CD4-positive, alpha-beta memory T cell (primary cell): ENCODE measurements at regions of chr16 and their contacts with region 1.

Region 1: GRCh38 chr16:84511180-84511824 is 6.8 kb upstream of the MEAK7 start:
- DNase-seq: peak; percentile 56 to 84 (median 82)
- H3K4me3 ChIP-seq: no peak overlapping the region
- H3K4me3 Mint-ChIP-seq: peak overlapping the region in 7 of 8 donors; percentile 2 to 73 (median 43)
- H3K27ac ChIP-seq: no peak overlapping the region
- H3K27ac Mint-ChIP-seq: peak overlapping the region; percentile 82 to 96 (median 91)
- H3K4me1 ChIP-seq: peaks cover 84% of the 10 kb centered on the region
- H3K4me1 Mint-ChIP-seq: peaks cover 51 to 78% (median 67%) of the 10 kb centered on the region in 4 donors
- H3K27me3 ChIP-seq: no peaks in the 10 kb centered on the region
- H3K27me3 Mint-ChIP-seq: no peaks in the 10 kb centered on the region

Region 2: DNA sequence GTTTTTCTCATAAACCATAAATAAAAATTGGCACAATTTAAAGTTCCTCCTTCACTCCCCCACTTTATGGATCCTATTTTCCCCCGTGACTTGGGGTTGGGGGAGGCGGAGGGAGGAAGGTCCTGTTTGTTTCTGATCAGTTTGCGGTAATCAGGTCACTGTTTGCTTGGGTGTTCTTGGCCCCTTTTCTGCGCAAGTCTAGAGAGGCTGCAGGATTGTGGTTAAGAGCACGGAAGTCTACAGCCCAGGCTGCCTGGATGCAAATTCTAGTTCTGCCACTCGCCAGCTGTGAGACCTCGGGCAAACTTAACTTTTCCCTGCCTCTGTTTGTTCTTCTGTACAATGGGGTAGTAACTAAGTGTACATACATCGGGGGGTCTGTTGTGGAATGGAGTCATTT is 130.9 kb before region 1 on chr16:
- CTCF ChIA-PET with region 1: no interaction called
- POLR2A ChIA-PET with region 1: no interaction called
- intact Hi-C with region 1: no loop called
- DNase-seq: peak in 1 of 5 donors; percentile 17
- H3K4me3 ChIP-seq: no peak overlapping the region
- H3K4me3 Mint-ChIP-seq: peak overlapping the region in 1 of 8 donors; percentile 24
- H3K27ac ChIP-seq: no peak overlapping the region
- H3K27ac Mint-ChIP-seq: peak overlapping the region in 2 of 7 donors; percentile 15 to 39
- H3K4me1 ChIP-seq: no peaks in the 10 kb centered on the region
- H3K4me1 Mint-ChIP-seq: peaks cover 0 to 2% (median 0%) of the 10 kb centered on the region in 4 donors
- H3K27me3 ChIP-seq: no peaks in the 10 kb centered on the region
- H3K27me3 Mint-ChIP-seq: peaks cover 6 to 17% of the 10 kb centered on the region in 2 donors

Region 3: DNA sequence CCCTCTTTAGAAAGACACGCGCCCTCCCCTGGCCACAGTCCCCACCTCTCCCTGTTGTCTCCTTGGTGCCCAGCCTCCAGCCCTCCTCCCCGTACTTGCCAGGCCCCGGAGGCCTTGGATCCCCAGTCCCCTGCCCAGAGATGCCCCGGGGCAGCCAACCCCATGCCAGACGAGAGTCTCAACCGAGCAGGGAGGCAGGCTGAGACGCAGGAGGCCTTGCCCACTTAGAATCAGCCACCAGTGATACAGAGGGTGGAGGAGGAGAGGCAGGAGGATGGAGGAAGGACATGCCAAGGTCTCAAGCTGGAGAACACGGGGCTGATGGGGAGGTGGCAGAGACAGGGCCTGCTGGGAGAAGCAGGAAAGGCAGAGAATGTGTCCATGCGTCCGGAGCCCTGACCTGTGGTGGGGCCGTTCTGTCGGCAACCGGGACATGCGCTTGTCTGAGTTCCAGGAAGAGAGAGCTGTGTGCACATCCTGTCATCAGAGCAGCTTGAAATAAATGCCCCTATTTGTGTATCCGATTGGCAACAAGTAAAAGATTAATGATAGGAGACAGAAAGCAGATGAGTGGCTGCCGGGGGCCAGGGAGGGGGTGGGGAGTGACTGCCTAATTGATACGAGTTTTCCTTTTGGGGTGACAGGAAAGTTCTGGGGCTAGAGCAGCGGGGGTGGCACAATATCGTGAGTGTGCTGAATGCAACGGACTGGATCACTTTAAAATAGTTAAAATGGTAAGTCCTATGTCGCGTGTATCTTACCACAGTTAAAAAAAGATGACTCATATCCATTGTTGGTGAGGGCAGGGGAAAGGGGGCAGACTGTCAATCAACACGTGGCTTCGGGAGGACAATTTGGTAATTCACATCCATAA is 37.9 kb after region 1 on chr16:
- CTCF ChIA-PET with region 1: interaction called, 23 read pairs
- POLR2A ChIA-PET with region 1: interaction called, 56 read pairs
- intact Hi-C with region 1: loop called (anchors 1 kb)
- DNase-seq: peak; percentile 63 to 74 (median 70)
- H3K4me3 ChIP-seq: peak overlapping the region; percentile 49 to 60
- H3K4me3 Mint-ChIP-seq: peak overlapping the region; percentile 84 to 96 (median 91)
- H3K27ac ChIP-seq: peak overlapping the region; percentile 81
- H3K27ac Mint-ChIP-seq: peak overlapping the region; percentile 91 to 99 (median 97)
- H3K4me1 ChIP-seq: peaks cover 78% of the 10 kb centered on the region
- H3K4me1 Mint-ChIP-seq: peaks cover 51 to 77% (median 63%) of the 10 kb centered on the region in 4 donors
- H3K27me3 ChIP-seq: no peaks in the 10 kb centered on the region
- H3K27me3 Mint-ChIP-seq: no peaks in the 10 kb centered on the region

Region 4: GRCh38 chr16:84593825-84594724 is 82.8 kb after region 1 on chr16:
- CTCF ChIA-PET with region 1: interaction called, 37 read pairs
- POLR2A ChIA-PET with region 1: interaction called, 104 read pairs
- intact Hi-C with region 1: no loop called
- DNase-seq: peak; percentile 83 to 95 (median 85)
- H3K4me3 ChIP-seq: peak overlapping the region; percentile 62 to 64
- H3K4me3 Mint-ChIP-seq: peak overlapping the region; percentile 88 to 93 (median 90)
- H3K27ac ChIP-seq: peak overlapping the region; percentile 81
- H3K27ac Mint-ChIP-seq: peak overlapping the region; percentile 95 to 99 (median 98)
- H3K4me1 ChIP-seq: peaks cover 70% of the 10 kb centered on the region
- H3K4me1 Mint-ChIP-seq: peaks cover 47 to 73% (median 65%) of the 10 kb centered on the region in 4 donors
- H3K27me3 ChIP-seq: no peaks in the 10 kb centered on the region
- H3K27me3 Mint-ChIP-seq: no peaks in the 10 kb centered on the region

Region 5: DNA sequence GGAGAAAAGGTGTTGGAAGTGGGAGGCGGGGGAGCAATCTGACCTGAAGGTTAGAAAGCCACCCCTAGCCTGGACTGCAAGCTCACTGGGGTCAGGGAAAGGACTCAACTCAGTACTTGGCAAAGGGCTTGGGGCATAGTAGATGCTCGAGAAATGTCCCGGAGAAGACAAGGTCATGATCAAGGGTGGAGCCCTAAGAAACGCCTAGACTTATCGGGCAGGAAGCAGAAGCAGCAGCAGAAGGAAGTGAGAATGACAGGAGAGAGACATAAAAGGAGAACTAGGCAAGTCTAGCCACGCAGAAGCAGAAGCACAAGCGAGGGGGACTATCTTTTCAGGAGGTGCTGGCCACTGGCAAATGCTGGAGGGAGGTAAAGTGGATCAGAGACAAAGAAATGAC is 96.4 kb after region 1 on chr16:
- CTCF ChIA-PET with region 1: interaction called, 358 read pairs
- POLR2A ChIA-PET with region 1: interaction called, 113 read pairs
- intact Hi-C with region 1: no loop called
- DNase-seq: peak in 4 of 5 donors; percentile 49 to 63 (median 52)
- H3K4me3 ChIP-seq: peak overlapping the region; percentile 18 to 31
- H3K4me3 Mint-ChIP-seq: peak overlapping the region; percentile 64 to 86 (median 76)
- H3K27ac ChIP-seq: peak overlapping the region; percentile 62
- H3K27ac Mint-ChIP-seq: peak overlapping the region; percentile 84 to 99 (median 92)
- H3K4me1 ChIP-seq: peaks cover 98% of the 10 kb centered on the region
- H3K4me1 Mint-ChIP-seq: peaks cover 78 to 97% (median 91%) of the 10 kb centered on the region in 4 donors
- H3K27me3 ChIP-seq: no peaks in the 10 kb centered on the region
- H3K27me3 Mint-ChIP-seq: no peaks in the 10 kb centered on the region

Region 6: GRCh38 chr16:84726079-84726668 is 214.9 kb after region 1 on chr16:
- CTCF ChIA-PET with region 1: interaction called, 78 read pairs
- POLR2A ChIA-PET with region 1: interaction called, 7 read pairs
- intact Hi-C with region 1: loop called (anchors 1 kb)
- DNase-seq: peak; percentile 70 to 80 (median 76)
- H3K4me3 ChIP-seq: no peak overlapping the region
- H3K4me3 Mint-ChIP-seq: peak overlapping the region in 6 of 8 donors; percentile 33 to 76 (median 56)
- H3K27ac ChIP-seq: no peak overlapping the region
- H3K27ac Mint-ChIP-seq: peak overlapping the region in 4 of 7 donors; percentile 45 to 66 (median 52)
- H3K4me1 ChIP-seq: peaks cover 47% of the 10 kb centered on the region
- H3K4me1 Mint-ChIP-seq: peaks cover 40 to 67% (median 57%) of the 10 kb centered on the region in 4 donors
- H3K27me3 ChIP-seq: no peaks in the 10 kb centered on the region
- H3K27me3 Mint-ChIP-seq: no peaks in the 10 kb centered on the region